Natural killer cell (primary cell): ENCODE measurements at regions of chr5 and their contacts with region 1.

Region 1: DNA sequence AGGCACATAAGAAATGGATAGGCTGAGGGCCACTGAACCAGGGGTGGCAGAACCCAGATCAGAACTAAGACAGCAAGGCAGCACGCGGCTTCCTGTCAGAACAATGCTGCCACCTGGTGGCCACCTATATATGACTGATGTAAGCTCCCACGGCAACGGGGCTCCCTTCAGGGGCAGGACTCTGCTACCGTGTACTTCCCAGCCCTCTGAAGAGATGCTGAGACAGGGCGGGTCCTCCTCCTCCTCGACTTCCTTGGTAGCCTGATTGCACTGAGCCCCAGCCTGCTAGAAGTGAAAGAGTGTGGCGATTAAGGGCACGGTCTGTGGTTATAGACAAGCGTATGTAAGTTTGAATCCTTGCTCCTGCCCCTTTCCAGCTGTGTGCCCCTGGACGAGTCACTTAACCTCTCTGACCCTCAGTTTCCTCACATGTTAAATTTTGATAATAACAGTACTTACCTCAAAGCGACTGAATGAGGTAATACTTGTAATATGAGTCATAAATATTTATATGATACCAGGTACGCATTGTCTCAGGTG is 13.3 kb downstream of the RPS14 start:
- DNase-seq: peak; percentile 85 to 96
- ATAC-seq: peak; percentile 96 to 99 (median 98)
- H3K4me3 ChIP-seq: no peak overlapping the region
- H3K4me3 Mint-ChIP-seq: no peak overlapping the region
- H3K27ac ChIP-seq: no peak overlapping the region
- H3K27ac Mint-ChIP-seq: peak overlapping the region; percentile 52 to 68
- H3K4me1 ChIP-seq: peaks cover 7% of the 10 kb centered on the region
- H3K4me1 Mint-ChIP-seq: peaks cover 7 to 11% of the 10 kb centered on the region in 2 donors
- H3K27me3 ChIP-seq: no peaks in the 10 kb centered on the region
- H3K27me3 Mint-ChIP-seq: no peaks in the 10 kb centered on the region
- CTCF ChIP-seq: peak; percentile 89

Region 2: DNA sequence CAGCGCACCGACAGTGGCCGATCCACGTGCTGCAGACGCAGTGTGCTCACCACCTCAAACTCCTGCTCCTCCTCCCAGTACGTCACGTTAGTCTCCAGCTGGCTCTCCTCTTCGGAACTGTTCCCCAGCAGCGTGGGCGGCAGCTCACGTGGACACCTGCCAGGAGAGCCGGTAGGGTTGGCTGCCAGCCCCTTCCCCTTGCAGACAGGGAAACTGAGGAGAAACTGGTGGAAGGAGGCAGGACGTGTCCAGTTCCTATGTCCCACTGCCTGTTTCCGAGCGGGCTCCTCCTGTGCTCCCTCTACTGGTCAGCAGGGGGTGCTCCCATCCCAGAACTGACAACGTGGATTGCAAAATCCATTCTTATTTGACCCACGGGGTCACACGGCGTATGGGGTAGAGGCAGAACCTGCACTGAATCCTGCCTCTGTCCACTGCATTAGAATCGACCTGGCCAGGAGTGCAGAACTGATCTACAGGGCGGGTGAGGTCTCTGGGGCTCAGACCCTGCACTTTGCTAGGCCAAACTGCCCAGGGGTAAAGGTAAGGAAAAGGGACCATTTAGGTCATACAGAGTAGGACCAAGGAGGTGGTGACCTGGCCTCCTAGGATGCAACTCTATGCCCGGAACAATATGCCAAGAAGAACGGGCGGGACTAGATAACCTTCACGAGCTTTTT is 306.3 kb before region 1 on chr5:
- intact Hi-C with region 1: loop called (anchors 1 kb)
- DNase-seq: peak; percentile 53 to 60
- ATAC-seq: peak; percentile 62 to 89 (median 79)
- H3K4me3 ChIP-seq: no peak overlapping the region
- H3K4me3 Mint-ChIP-seq: peak overlapping the region; percentile 62
- H3K27ac ChIP-seq: no peak overlapping the region
- H3K27ac Mint-ChIP-seq: peak overlapping the region; percentile 45 to 74
- H3K4me1 ChIP-seq: peaks cover 27% of the 10 kb centered on the region
- H3K4me1 Mint-ChIP-seq: peaks cover 21 to 43% of the 10 kb centered on the region in 2 donors
- H3K27me3 ChIP-seq: no peaks in the 10 kb centered on the region
- H3K27me3 Mint-ChIP-seq: peaks cover 0 to 3% of the 10 kb centered on the region in 2 donors
- CTCF ChIP-seq: peak; percentile 81

Region 3: GRCh38 chr5:150161242-150162141 is 274.7 kb before region 1 on chr5:
- intact Hi-C with region 1: loop called (anchors 1 kb)
- DNase-seq: peak; percentile 73 to 76
- ATAC-seq: peak; percentile 65 to 97 (median 92)
- H3K4me3 ChIP-seq: no peak overlapping the region
- H3K4me3 Mint-ChIP-seq: no peak overlapping the region
- H3K27ac ChIP-seq: no peak overlapping the region
- H3K27ac Mint-ChIP-seq: no peak overlapping the region
- H3K4me1 ChIP-seq: peaks cover 1% of the 10 kb centered on the region
- H3K4me1 Mint-ChIP-seq: peaks cover under 1 to 11% of the 10 kb centered on the region in 2 donors
- H3K27me3 ChIP-seq: no peaks in the 10 kb centered on the region
- H3K27me3 Mint-ChIP-seq: peaks cover 20 to 26% of the 10 kb centered on the region in 2 donors
- CTCF ChIP-seq: peak; percentile 94

Region 4: GRCh38 chr5:150272526-150272925 is 163.7 kb before region 1 on chr5:
- intact Hi-C with region 1: loop called (anchors 1 kb)
- DNase-seq: peak in 1 of 2 donors; percentile 35
- ATAC-seq: peak in 1 of 3 donors; percentile 44
- H3K4me3 ChIP-seq: no peak overlapping the region
- H3K4me3 Mint-ChIP-seq: no peak overlapping the region
- H3K27ac ChIP-seq: no peak overlapping the region
- H3K27ac Mint-ChIP-seq: no peak overlapping the region
- H3K4me1 ChIP-seq: no peaks in the 10 kb centered on the region
- H3K4me1 Mint-ChIP-seq: no peaks in the 10 kb centered on the region
- H3K27me3 ChIP-seq: no peaks in the 10 kb centered on the region
- H3K27me3 Mint-ChIP-seq: peaks cover 0 to 10% of the 10 kb centered on the region in 2 donors
- CTCF ChIP-seq: no peak

Region 5: GRCh38 chr5:150357326-150358260 is 78.6 kb before region 1 on chr5 and contains the start of gene TCOF1:
- intact Hi-C with region 1: loop called (anchors 5 kb)
- DNase-seq: peak; percentile 97 to 98
- ATAC-seq: peak; percentile 99 to 100 (median 99)
- H3K4me3 ChIP-seq: peak within 1 kb of the TSS; percentile 64
- H3K4me3 Mint-ChIP-seq: peak within 1 kb of the TSS; percentile 85
- H3K27ac ChIP-seq: peak within 1 kb of the TSS; percentile 46
- H3K27ac Mint-ChIP-seq: peak within 1 kb of the TSS; percentile 84 to 85
- H3K4me1 ChIP-seq: peaks cover 22% of the 10 kb centered on the region
- H3K4me1 Mint-ChIP-seq: peaks cover 12 to 33% of the 10 kb centered on the region in 2 donors
- H3K27me3 ChIP-seq: no peaks in the 10 kb centered on the region
- H3K27me3 Mint-ChIP-seq: peaks cover 0 to 3% of the 10 kb centered on the region in 2 donors
- CTCF ChIP-seq: no peak
- total RNA-seq, gene TCOF1: 51.5 to 62.6 (median 51.7) TPM

Region 6: DNA sequence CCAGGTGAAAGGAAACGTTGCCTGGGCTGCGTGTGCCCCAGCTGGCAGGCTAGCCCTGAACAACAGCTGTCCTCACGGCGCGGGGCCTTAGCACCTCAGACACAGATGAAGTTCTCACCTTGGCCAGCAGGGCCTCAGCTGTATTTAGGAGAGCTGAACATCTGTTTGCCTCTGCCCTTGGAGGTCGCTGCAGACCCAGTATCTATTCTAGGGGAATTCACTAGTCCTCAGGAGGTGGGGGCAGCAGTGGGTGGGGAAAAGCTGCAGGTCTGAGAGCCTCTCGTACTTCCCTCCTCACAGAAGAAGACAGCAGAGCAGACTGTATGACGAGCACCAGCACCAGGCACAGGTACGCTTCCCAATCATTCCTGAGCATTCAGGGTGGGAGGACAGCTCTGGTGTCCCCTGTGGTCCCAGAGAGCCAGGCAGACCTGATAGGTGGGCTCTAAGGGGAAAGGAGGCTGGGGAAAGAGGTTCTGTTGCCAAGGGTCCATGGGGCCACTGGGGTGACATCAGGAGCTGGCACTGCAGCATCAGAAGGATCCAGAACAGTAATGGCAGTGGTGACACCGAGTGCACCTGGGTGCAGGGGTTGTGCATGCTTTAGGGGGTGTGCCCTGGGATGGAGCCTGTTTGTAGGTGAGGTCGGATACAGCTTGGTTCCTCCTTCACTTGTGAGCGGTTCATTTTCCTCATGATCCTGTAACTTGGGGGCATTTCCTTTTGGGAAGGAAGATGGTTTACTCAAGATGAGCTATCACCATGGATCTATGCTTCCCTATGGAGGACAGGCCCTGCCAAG is 37.3 kb before region 1 on chr5:
- intact Hi-C with region 1: loop called (anchors 1 kb)
- DNase-seq: peak in 1 of 2 donors; percentile 68
- ATAC-seq: peak; percentile 22 to 37 (median 25)
- H3K4me3 ChIP-seq: no peak overlapping the region
- H3K4me3 Mint-ChIP-seq: no peak overlapping the region
- H3K27ac ChIP-seq: no peak overlapping the region
- H3K27ac Mint-ChIP-seq: peak overlapping the region; percentile 74 to 84
- H3K4me1 ChIP-seq: no peaks in the 10 kb centered on the region
- H3K4me1 Mint-ChIP-seq: peaks cover 11 to 20% of the 10 kb centered on the region in 2 donors
- H3K27me3 ChIP-seq: no peaks in the 10 kb centered on the region
- H3K27me3 Mint-ChIP-seq: no peaks in the 10 kb centered on the region
- CTCF ChIP-seq: peak; percentile 19

Region 7: DNA sequence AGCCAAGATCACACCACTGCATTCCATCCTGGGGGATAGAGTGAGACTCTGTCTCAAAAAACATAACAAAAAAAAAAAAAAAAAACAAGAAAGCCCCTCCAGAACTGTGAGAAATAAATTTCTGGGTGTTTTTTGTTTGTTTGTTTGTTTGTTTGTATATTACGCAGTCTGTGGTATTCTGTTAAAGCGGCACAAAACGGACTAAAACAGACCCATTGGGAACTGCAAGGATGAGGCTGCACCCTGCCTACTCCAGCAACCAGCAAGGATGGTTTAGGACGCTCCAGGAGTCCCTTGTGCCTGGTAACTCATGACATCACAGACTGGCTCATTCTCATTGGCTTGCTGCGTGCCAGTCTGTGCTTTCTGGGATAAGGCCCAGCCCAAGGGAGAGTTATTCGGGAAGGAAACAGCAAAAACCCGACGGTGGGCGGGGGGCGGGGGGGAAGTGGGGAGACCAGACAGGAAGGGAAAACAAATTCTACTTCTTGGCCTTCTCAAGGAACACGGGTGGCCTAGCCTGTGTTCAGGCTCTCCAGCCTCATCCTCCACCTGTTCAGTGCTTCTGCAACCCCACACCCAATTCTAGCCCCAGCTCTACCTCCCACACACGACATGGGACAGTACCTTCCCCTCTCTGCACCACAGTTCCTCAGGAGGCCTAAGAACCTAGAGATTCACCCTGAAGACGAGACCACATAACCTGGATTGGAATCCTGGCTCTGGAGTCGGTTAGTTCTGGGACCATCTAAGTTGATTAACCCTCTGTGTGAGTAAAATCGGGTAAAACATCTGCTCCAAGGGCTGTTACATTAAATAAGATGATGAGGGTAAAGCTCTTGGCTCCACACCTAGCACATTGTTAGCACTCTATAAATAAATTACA is 26.3 kb before region 1 on chr5:
- intact Hi-C with region 1: loop called (anchors 1 kb)
- DNase-seq: peak in 1 of 2 donors; percentile 77
- ATAC-seq: no peak
- H3K4me3 ChIP-seq: peak overlapping the region; percentile 89
- H3K4me3 Mint-ChIP-seq: peak overlapping the region; percentile 98
- H3K27ac ChIP-seq: peak overlapping the region; percentile 98
- H3K27ac Mint-ChIP-seq: peak overlapping the region; percentile 99 to 100
- H3K4me1 ChIP-seq: peaks cover 81% of the 10 kb centered on the region
- H3K4me1 Mint-ChIP-seq: peaks cover 48 to 53% of the 10 kb centered on the region in 2 donors
- H3K27me3 ChIP-seq: no peaks in the 10 kb centered on the region
- H3K27me3 Mint-ChIP-seq: no peaks in the 10 kb centered on the region
- CTCF ChIP-seq: no peak